Heart right ventricle (tissue), 16 donors: ENCODE measurements at regions of chr11 and their contacts with region 1.

Region 1: DNA sequence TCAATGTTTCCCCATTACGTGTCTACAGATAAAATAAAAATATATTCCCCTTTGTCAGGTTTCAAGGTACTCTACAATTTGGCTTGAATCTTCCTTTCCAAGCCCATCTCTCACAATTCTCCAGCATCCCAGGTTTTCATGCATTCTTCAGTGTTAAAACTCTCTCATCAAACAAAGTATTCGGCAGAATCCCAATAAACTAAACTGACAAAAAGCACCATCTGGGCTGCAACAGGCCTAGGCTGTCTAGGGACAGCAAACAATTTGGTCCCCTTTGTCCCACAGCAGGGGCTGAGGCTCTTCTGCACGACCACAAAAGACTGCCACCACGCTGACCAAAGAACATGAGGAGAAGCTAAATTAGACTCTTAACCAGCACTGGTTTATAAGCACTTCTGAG is 159.4 kb downstream of the CADM1 start:
- DNase-seq: no peak
- ATAC-seq: no peak
- H3K4me3 ChIP-seq: no peak overlapping the region
- H3K27ac ChIP-seq: no peak overlapping the region
- H3K4me1 ChIP-seq: peaks cover 0 to 15% (median 0%) of the 10 kb centered on the region in 9 donors
- H3K27me3 ChIP-seq: no peaks in the 10 kb centered on the region
- CTCF ChIP-seq: no peak

Region 2: GRCh38 chr11:115496917-115497702 is 152.3 kb after region 1 on chr11:
- intact Hi-C with region 1: loop called in 1 of 10 experiments (anchors 5 kb)
- DNase-seq: no peak
- ATAC-seq: no peak
- H3K4me3 ChIP-seq: no peak overlapping the region
- H3K27ac ChIP-seq: no peak overlapping the region
- H3K4me1 ChIP-seq: peaks cover 0 to 14% (median 8%) of the 10 kb centered on the region in 9 donors
- H3K27me3 ChIP-seq: peaks cover 0 to 41% (median 12%) of the 10 kb centered on the region in 7 donors
- CTCF ChIP-seq: no peak